ENCODE measurements at regions of chr17 and their contacts with region 1.

Region 1: DNA sequence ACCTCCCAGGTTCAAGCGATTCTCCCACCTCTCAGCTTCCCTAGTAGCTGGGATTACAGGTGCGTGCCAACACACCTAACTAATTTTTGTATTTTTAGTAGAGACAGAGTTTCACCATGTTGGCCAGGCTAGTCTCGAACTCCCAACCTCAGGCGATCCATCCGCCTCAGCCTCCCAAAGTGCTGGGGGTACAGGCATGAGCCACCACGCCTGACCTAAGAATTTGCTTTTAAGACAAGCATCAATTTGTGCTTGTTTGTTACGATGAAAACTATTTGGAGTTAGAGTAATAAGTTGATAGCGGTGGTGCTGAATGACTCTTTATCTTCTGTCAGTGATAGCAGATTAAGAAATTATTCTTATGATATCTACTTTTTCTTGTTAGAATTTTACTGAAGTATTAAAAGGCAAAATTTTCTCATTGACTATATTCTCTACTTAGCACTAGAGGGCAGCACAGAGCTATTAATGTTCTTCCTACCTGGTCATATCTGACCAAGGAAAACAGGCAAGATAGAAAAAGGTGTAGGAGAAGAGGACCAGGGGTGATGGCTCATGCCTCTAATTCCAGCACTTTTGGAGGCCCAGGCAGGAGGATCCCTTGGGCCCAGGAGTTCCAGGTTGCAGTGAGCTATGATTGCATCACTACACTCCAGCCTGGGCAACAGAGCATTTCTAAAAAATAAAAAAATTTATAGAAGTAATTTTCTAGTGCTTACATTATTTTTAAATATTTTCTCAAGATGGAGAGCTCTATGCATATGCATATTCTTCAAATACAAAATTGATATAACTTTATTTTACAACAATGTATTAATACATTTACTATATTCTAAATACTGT is 24.5 kb downstream of the STXBP4 start:
- ATAC-seq: peak in 6 of 8 experiments; percentile 35 to 54 (median 42)
- H3K4me3 ChIP-seq: no peak overlapping the region
- H3K27ac ChIP-seq: no peak overlapping the region
- H3K4me1 ChIP-seq: no peaks in the 10 kb centered on the region

Region 2: DNA sequence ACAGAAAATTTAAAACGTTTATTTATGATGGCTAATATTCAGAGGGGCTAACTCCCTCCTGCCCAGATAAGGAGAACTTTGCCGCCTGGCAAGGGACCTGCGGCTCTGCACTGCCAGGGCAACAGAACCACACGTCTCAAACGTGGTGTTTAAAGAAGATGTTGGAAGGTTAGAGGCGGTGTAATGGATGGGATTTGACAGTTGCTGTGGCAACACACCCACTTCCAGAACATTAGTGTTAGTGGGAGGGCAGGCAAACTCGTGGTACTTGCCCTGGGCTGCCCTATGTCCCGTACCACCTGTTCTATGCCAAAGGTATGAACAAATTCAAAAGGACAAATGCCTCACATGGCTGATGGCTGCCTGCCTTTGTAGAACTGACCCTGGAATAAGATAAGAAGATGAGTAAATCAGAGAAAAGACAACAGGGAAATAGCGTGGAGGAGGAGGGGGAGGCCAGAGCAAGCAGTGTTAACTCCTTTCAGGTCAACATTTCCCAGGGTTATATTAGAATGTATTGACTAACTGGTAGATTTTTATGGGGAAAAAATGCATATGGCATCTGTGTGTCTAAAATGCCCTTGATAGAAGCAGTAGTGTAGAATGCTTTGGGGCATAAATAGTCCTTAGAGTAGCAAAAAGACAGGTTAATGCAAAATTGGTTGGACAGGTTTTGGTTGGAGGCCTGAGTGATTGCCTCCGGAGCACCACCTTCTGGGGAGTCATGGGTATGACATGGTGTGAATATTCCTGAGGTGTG is 302.6 kb after region 1 on chr17:
- in situ Hi-C with region 1: loop called in 1 of 9 experiments (anchors 25 kb)
- ATAC-seq: peak in 7 of 8 experiments; percentile 38 to 78 (median 66)
- H3K4me3 ChIP-seq: no peak overlapping the region
- H3K27ac ChIP-seq: no peak overlapping the region
- H3K4me1 ChIP-seq: no peaks in the 10 kb centered on the region

Region 3: GRCh38 chr17:55348749-55349354 is 355.8 kb after region 1 on chr17:
- in situ Hi-C with region 1: loop called in 4 of 9 experiments (anchors 10 to 25 kb)
- ATAC-seq: peak in 7 of 8 experiments; percentile 31 to 67 (median 48)
- H3K4me3 ChIP-seq: no peak overlapping the region
- H3K27ac ChIP-seq: no peak overlapping the region
- H3K4me1 ChIP-seq: no peaks in the 10 kb centered on the region

Region 4: DNA sequence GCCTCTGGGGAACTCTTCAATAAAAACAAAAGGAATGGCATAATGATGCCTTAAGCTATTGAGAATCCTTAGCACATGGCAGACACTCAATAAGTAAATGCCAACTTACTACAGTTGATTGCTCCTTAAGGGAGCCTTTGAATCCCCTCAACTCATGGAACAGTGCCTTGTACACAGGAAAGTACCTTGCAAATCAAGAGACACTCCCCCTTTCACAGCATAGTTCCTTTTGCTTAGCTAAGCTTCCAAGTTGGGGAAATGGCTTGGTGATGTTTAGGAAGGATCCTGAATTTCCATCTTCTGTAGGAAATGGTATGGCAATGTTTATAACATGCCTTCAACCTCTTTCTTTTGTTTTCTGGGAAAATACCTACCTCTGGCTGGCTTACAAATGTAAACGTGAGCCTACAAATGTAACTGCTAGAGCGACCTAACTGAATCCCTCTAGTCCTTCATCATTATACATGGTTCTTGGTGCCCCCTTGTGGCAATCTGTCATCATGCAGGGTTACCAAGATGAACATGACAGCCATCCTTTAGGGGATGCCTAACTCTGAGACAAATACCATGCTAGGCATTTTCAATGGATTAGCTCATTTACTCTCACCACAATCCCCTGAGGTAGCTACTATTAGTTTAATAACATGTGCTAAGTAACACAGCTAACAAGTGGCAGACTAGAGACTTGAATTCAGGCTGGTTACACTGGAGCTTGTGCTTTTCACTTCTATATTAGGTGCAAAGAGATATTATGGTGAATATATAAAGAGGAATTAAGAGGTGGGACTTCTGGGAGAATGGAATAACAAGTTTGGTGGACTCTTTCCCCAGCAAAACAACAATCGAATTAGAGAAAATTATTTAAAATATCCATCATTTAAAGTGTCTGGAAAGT is 363.7 kb after region 1 on chr17:
- in situ Hi-C with region 1: loop called in 1 of 9 experiments (anchors 25 kb)
- ATAC-seq: peak in 4 of 8 experiments; percentile 49 to 98 (median 96)
- H3K4me3 ChIP-seq: no peak overlapping the region
- H3K27ac ChIP-seq: no peak overlapping the region
- H3K4me1 ChIP-seq: no peaks in the 10 kb centered on the region

Region 5: GRCh38 chr17:55496094-55496881 is 503.3 kb after region 1 on chr17:
- in situ Hi-C with region 1: loop called in 3 of 9 experiments (anchors 25 kb)
- ATAC-seq: peak in 2 of 8 experiments; percentile 65 to 82
- H3K4me3 ChIP-seq: no peak overlapping the region
- H3K27ac ChIP-seq: no peak overlapping the region
- H3K4me1 ChIP-seq: peaks cover 8 to 9% of the 10 kb centered on the region in 2 donors

Region 6: DNA sequence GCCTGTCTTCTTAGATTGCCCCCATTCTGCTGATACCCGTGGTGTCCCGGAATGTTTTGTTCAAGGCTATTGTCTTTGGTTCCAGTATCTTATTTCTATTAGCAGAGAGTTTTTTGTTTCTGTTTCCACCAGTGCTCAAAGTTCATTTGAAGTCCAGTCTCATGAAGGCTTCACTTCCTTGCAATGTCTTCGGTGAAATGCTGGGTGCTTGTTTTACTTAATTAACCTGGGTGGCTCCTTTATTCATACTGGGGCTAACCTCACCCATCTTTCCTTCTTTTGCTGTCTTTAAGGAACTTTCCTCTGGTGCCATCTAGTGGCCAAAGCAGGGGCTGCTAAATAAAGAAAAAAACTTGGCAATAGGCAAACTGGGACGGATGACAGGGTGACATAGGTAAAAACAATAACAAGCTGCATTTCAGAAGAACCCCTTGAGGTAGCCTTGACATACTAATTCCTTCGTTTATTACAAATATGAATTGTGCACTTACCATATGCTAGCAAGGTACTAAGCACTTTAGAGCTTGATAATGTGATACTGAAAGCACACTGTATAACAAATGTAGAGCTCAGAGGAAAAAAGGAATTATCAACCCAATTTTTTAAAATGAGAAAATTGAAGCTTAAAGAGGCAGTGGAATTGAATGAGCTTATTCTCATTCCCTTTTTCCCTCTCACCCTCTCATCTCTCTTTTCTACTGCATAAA is 521.0 kb after region 1 on chr17:
- in situ Hi-C with region 1: loop called in 5 of 9 experiments (anchors 10 to 25 kb)
- ATAC-seq: peak; percentile 33 to 90 (median 50)
- H3K4me3 ChIP-seq: no peak overlapping the region
- H3K27ac ChIP-seq: no peak overlapping the region
- H3K4me1 ChIP-seq: no peaks in the 10 kb centered on the region